MCF 10A (cell line): ENCODE measurements at regions of chr1 and their contacts with region 1.

Region 1: GRCh38 chr1:224106568-224107281 is 7.2 kb upstream of the FBXO28 start:
- DNase-seq: peak; percentile 78
- H3K4me3 Mint-ChIP-seq: peak overlapping the region; percentile 35
- H3K27ac Mint-ChIP-seq: peak overlapping the region; percentile 29
- H3K4me1 Mint-ChIP-seq: peaks cover 7% of the 10 kb centered on the region
- H3K27me3 Mint-ChIP-seq: no peaks in the 10 kb centered on the region
- CTCF ChIP-seq: peak; percentile 55

Region 2: DNA sequence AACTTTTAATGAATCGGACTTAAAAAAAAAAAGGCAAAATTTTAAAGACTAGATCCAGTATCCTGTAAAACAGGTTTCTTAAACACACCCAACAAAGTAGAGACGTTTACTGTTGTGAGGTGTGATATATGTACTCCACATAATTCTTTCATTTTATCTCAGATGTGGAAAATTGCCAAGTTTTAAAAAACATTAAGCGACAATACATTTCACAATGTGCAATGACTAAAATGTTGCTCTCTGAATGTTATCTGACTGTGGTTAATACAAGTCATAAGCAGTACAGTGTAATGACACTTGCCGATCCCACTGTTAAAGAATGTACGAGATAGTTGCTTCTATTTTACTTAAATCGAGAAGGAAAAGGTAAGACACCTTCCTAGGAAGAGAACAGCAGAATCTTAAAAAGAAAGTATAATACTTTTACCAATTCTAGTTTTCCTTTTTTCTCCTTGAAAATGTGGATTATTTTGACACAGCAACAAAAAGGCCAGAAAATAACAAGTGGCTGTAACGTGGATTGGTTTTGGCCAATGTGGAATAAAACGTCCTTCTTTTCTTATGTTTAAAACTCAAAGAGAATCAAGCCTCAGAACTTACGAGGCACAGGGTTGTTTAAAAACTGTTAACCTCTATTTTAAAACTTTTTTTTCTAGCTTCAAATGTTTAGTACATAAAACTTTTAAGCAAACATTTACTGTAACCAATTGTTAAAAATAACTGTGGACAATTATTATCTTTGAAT is 312.4 kb before region 1 on chr1:
- CTCF ChIA-PET with region 1: no interaction called
- POLR2A ChIA-PET with region 1: no interaction called
- intact Hi-C with region 1: no loop called
- DNase-seq: no peak
- H3K4me3 Mint-ChIP-seq: no peak overlapping the region
- H3K27ac Mint-ChIP-seq: no peak overlapping the region
- H3K4me1 Mint-ChIP-seq: no peaks in the 10 kb centered on the region
- H3K27me3 Mint-ChIP-seq: no peaks in the 10 kb centered on the region
- CTCF ChIP-seq: no peak

Region 3: GRCh38 chr1:224067621-224068457 is 38.9 kb before region 1 on chr1:
- CTCF ChIA-PET with region 1: interaction called, 9 read pairs
- POLR2A ChIA-PET with region 1: interaction called, 11 read pairs
- intact Hi-C with region 1: no loop called
- DNase-seq: peak; percentile 78
- H3K4me3 Mint-ChIP-seq: no peak overlapping the region
- H3K27ac Mint-ChIP-seq: no peak overlapping the region
- H3K4me1 Mint-ChIP-seq: peaks cover 17% of the 10 kb centered on the region
- H3K27me3 Mint-ChIP-seq: no peaks in the 10 kb centered on the region
- CTCF ChIP-seq: no peak

Region 4: DNA sequence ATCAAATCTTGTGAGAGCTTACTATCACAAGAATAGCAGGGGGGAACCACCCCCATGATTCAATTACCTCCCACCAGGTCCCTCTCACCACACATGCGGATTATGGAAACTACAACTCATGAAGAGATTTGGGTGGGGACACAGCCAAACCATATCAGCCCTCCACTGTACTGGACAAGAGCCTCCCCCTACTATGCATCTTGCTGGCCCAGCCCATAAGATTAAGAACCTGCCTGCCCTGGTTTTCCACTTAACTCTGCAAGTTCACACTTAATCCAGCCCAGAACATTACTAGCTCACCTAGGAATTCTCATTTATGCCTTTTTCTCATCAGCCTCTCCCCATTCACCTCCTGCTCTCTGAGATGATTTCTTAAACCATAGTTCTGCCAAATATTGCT is 10.9 kb before region 1 on chr1:
- CTCF ChIA-PET with region 1: interaction called, 19 read pairs
- POLR2A ChIA-PET with region 1: interaction called, 6 read pairs
- intact Hi-C with region 1: no loop called
- DNase-seq: no peak
- H3K4me3 Mint-ChIP-seq: no peak overlapping the region
- H3K27ac Mint-ChIP-seq: no peak overlapping the region
- H3K4me1 Mint-ChIP-seq: no peaks in the 10 kb centered on the region
- H3K27me3 Mint-ChIP-seq: peaks cover 48% of the 10 kb centered on the region
- CTCF ChIP-seq: no peak